Dendritic cell treated with granulocyte-macrophage colony-stimulating factor and Interleukin-4, amounts not matched to agents 40 ng/mL and 50 ng/mL, for 4 days (primary cell): ENCODE measurements at regions of chr20 and their contacts with region 1.

Region 1: DNA sequence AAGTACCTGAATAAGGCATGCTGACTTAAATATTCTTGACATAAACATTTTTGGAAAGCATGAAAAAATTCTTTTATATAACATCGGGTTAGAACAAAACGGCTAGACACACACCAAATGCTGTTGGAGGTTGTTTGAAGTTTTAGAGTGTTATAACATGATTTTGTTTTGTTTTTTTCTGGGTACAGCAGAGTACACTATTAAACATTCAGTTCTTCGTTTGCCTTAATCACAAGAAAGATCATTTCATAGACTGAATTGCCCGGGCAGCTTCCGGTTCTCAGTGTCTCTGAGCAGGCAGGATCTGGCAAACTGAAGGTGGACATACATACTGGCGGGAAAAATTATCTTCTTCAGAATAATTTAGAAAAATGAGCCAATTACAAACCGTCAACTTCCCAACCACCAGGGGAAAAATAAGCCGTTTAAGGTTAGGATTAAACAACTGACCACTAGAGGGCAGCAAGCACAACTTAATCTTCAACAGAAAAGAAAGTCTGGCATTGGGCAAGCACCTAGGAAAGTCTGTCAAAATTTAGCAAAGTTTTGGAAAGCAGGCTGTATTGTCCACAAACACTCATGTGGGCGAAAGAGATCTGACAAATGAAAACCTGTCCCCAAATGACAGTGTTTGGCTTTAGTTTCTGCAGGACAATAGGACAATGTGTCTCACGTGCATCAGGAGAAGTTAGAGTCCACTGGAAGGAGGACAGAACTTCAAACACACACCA is 15.0 kb downstream of the ZNF217 start:
- H3K4me3 Mint-ChIP-seq: peak overlapping the region; percentile 46
- H3K27ac Mint-ChIP-seq: peak overlapping the region; percentile 87
- H3K4me1 Mint-ChIP-seq: peaks cover 82% of the 10 kb centered on the region
- H3K27me3 Mint-ChIP-seq: no peaks in the 10 kb centered on the region

Region 2: GRCh38 chr20:53623454-53624211 is 45.0 kb after region 1 on chr20:
- intact Hi-C with region 1: loop called (anchors 5 kb)
- H3K4me3 Mint-ChIP-seq: peak overlapping the region; percentile 55
- H3K27ac Mint-ChIP-seq: peak overlapping the region; percentile 90
- H3K4me1 Mint-ChIP-seq: peaks cover 29% of the 10 kb centered on the region
- H3K27me3 Mint-ChIP-seq: no peaks in the 10 kb centered on the region

Region 3: DNA sequence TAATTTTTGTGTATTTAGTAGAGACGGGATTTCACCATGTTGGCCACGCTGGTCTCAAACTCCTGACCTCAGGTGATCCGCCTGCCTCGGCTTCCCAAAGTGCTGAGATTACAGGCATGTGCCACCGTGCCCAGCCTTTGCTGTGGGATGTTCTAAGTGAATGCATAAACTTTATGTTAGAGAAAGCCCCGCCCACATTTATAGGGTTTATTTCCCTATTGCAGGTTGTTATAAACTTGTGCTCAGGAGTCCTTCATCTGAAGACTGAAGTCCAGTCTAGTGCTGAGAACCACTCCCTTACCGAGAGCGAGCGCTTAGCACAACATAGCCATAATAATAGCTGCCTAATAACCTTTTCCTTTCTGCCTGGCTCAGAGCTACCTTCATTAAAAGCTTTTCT is 90.3 kb after region 1 on chr20:
- intact Hi-C with region 1: no loop called
- H3K4me3 Mint-ChIP-seq: no peak overlapping the region
- H3K27ac Mint-ChIP-seq: peak overlapping the region; percentile 10
- H3K4me1 Mint-ChIP-seq: peaks cover 5% of the 10 kb centered on the region
- H3K27me3 Mint-ChIP-seq: no peaks in the 10 kb centered on the region

Region 4: GRCh38 chr20:53857723-53858236 is 279.1 kb after region 1 on chr20:
- intact Hi-C with region 1: loop called (anchors 10 kb)
- H3K4me3 Mint-ChIP-seq: no peak overlapping the region
- H3K27ac Mint-ChIP-seq: peak overlapping the region; percentile 68
- H3K4me1 Mint-ChIP-seq: peaks cover 49% of the 10 kb centered on the region
- H3K27me3 Mint-ChIP-seq: no peaks in the 10 kb centered on the region

Region 5: GRCh38 chr20:53869466-53870258 is 291.0 kb after region 1 on chr20:
- intact Hi-C with region 1: loop called (anchors 5 kb)
- H3K4me3 Mint-ChIP-seq: no peak overlapping the region
- H3K27ac Mint-ChIP-seq: peak overlapping the region; percentile 74
- H3K4me1 Mint-ChIP-seq: peaks cover 49% of the 10 kb centered on the region
- H3K27me3 Mint-ChIP-seq: no peaks in the 10 kb centered on the region

Region 6: DNA sequence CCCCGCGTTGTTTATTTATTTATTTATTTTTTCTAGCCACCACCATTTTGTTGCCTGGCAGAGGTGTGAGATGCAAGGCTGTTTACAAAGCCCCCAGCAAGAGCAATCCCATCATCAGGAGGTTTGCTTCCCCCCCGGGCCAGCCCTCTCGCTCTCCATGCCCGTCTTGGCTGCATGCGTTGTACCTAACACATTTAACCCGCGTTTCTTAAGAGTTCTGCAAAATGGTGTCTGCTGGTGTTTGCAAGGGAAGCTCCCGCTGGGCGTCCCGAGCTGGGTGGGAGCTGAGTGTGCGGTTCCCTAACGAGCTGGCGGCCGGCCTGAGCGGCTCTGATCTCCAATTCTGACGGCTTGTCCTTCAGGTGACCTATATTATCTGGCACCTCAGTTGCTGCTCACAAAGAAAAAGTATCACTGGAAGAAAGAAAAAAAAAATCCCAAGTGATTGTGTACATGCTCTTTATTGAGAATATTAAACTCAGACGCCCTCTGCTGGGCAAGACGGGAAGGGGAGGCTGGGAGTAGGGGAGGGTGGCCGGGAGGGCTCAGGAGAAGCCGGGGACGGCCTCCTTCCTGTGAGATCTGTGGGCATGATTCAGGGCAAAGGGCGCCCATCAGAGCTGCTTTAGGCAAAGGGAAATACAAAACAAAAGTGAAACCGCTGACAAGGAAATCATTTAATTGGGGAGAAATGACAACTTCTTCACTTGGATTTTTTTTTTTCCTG is 337.0 kb after region 1 on chr20:
- intact Hi-C with region 1: loop called (anchors 2 kb)
- H3K4me3 Mint-ChIP-seq: peak overlapping the region; percentile 94
- H3K27ac Mint-ChIP-seq: peak overlapping the region; percentile 95
- H3K4me1 Mint-ChIP-seq: peaks cover 70% of the 10 kb centered on the region
- H3K27me3 Mint-ChIP-seq: no peaks in the 10 kb centered on the region

Region 7: GRCh38 chr20:53939572-53940359 is 361.1 kb after region 1 on chr20:
- intact Hi-C with region 1: loop called (anchors 1 kb)
- H3K4me3 Mint-ChIP-seq: peak overlapping the region; percentile 9
- H3K27ac Mint-ChIP-seq: peak overlapping the region; percentile 82
- H3K4me1 Mint-ChIP-seq: peaks cover 76% of the 10 kb centered on the region
- H3K27me3 Mint-ChIP-seq: no peaks in the 10 kb centered on the region

Region 8: GRCh38 chr20:54062812-54063280 is 484.2 kb after region 1 on chr20:
- intact Hi-C with region 1: loop called (anchors 2 kb)
- H3K4me3 Mint-ChIP-seq: no peak overlapping the region
- H3K27ac Mint-ChIP-seq: no peak overlapping the region
- H3K4me1 Mint-ChIP-seq: peaks cover 7% of the 10 kb centered on the region
- H3K27me3 Mint-ChIP-seq: no peaks in the 10 kb centered on the region